K562 (cell line): ENCODE measurements at regions of chr1 and their contacts with region 1.

Region 1: GRCh38 chr1:233790662-233791375 is 113.7 kb upstream of the SLC35F3 start:
- DNase-seq: peak; percentile 77 to 86 (median 81)
- ATAC-seq: peak; percentile 99
- H3K4me3 ChIP-seq: no peak overlapping the region
- H3K27ac ChIP-seq: no peak overlapping the region
- H3K4me1 ChIP-seq: no peaks in the 10 kb centered on the region
- H3K27me3 ChIP-seq: no peaks in the 10 kb centered on the region
- CTCF ChIP-seq: peak; percentile 89 to 95 (median 93)
- EP300 ChIP-seq: no peak
- POLR2A ChIP-seq: no peak
- RAD21 ChIP-seq: peak; percentile 93 to 98

Region 2: GRCh38 chr1:233394860-233395717 is 395.7 kb before region 1 on chr1:
- CTCF ChIA-PET with region 1: interaction called, 8 read pairs
- POLR2A ChIA-PET with region 1: no interaction called
- in situ Hi-C with region 1: no loop called
- intact Hi-C with region 1: loop called (anchors 1 kb)
- DNase-seq: peak; percentile 47 to 65 (median 52)
- ATAC-seq: peak; percentile 98
- H3K4me3 ChIP-seq: no peak overlapping the region
- H3K27ac ChIP-seq: no peak overlapping the region
- H3K4me1 ChIP-seq: no peaks in the 10 kb centered on the region; a peak in 1 of 5 replicates
- H3K27me3 ChIP-seq: no peaks in the 10 kb centered on the region
- CTCF ChIP-seq: peak; percentile 80 to 91 (median 83)
- EP300 ChIP-seq: no peak
- POLR2A ChIP-seq: no peak
- RAD21 ChIP-seq: peak; percentile 94 to 95

Region 3: DNA sequence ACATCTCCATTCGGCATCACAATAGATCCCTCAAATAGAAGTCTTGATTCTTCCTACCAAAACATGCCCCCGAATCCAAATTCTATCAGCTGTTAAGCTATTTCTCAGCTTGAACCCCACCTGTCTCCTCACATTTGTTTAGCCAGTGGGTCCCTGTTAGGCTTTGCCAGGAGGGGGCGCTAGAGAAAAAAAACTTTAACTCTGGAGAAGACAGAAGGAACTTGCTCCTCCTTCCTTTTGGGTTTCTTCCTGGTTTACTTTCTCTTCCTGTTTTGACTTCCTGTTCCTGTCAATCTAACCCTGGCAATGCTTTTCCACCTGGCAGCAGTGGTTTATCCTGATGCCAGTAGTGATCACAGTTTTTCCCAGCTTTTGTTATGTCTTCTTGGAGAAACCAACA is 272.5 kb before region 1 on chr1:
- CTCF ChIA-PET with region 1: interaction called, 3 read pairs
- POLR2A ChIA-PET with region 1: no interaction called
- in situ Hi-C with region 1: no loop called
- intact Hi-C with region 1: loop called (anchors 2 kb)
- DNase-seq: peak; percentile 73 to 81 (median 79)
- ATAC-seq: peak; percentile 90
- H3K4me3 ChIP-seq: no peak overlapping the region
- H3K27ac ChIP-seq: no peak overlapping the region; the same call in 2 of the 3 replicates
- H3K4me1 ChIP-seq: peaks cover 0 to 6% of the 10 kb centered on the region in 2 experiments; a peak in 1 of 5 replicates
- H3K27me3 ChIP-seq: no peaks in the 10 kb centered on the region
- CTCF ChIP-seq: peak; percentile 68 to 81 (median 77)
- EP300 ChIP-seq: no peak; the same call in 1 of the 2 replicates
- POLR2A ChIP-seq: no peak
- RAD21 ChIP-seq: peak; percentile 39 to 77; a peak in 3 of 4 replicates

Region 4: GRCh38 chr1:233668725-233669294 is 122.0 kb before region 1 on chr1:
- CTCF ChIA-PET with region 1: no interaction called
- POLR2A ChIA-PET with region 1: no interaction called
- in situ Hi-C with region 1: no loop called
- intact Hi-C with region 1: loop called (anchors 5 kb)
- DNase-seq: peak; percentile 86 to 97 (median 89)
- ATAC-seq: peak; percentile 95
- H3K4me3 ChIP-seq: no peak overlapping the region
- H3K27ac ChIP-seq: peak overlapping the region; percentile 72
- H3K4me1 ChIP-seq: peaks cover 24 to 44% of the 10 kb centered on the region in 2 experiments
- H3K27me3 ChIP-seq: no peaks in the 10 kb centered on the region
- CTCF ChIP-seq: no peak
- EP300 ChIP-seq: peak; percentile 95
- POLR2A ChIP-seq: no peak; the same call in 1 of the 2 replicates
- RAD21 ChIP-seq: no peak

Region 5: DNA sequence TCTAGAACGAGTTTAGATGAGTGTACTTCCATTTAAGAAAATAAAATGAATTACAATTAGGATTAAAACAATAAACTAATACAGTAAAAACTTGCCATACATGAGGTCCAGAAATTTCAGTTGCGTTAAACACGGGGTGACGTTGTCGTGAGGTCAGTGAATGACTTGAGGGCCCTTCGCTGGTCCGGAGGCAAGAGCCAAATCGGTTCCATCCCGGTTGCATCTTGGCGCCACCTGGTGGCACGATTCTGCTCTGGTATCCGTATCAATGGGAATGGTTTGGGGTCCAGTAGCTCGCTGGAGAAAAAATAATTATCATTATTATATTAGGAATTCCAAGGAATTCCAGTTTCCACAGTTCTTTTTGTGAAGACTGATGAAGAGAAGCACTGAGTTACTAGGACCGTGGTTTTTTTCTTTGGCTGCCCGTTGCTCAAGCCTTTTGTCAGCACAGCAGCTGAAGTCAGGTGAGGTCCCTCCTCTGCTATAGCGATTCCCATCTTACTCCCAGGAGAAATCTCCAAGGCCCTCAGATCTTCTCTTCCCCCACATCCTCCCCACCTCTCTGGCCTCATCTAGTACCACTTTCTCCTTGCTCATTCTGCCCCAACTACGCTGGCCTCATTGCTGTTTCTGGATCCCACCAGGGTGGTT is 275.1 kb after region 1 on chr1:
- CTCF ChIA-PET with region 1: no interaction called
- POLR2A ChIA-PET with region 1: no interaction called
- in situ Hi-C with region 1: no loop called
- intact Hi-C with region 1: loop called (anchors 5 kb)
- DNase-seq: peak; percentile 79 to 85 (median 80)
- ATAC-seq: peak; percentile 99
- H3K4me3 ChIP-seq: no peak overlapping the region
- H3K27ac ChIP-seq: no peak overlapping the region
- H3K4me1 ChIP-seq: no peaks in the 10 kb centered on the region
- H3K27me3 ChIP-seq: no peaks in the 10 kb centered on the region; a peak in 1 of 5 replicates
- CTCF ChIP-seq: peak; percentile 87 to 88 (median 87)
- EP300 ChIP-seq: no peak
- POLR2A ChIP-seq: no peak
- RAD21 ChIP-seq: peak; percentile 90 to 93